H1 (cell line): ENCODE measurements at regions of chr19 and their contacts with region 1.

Region 1: GRCh38 chr19:13104360-13104847 is 1.7 kb upstream of the LYL1 start:
- DNase-seq: peak in 1 of 2 experiments; percentile 95
- H3K4me3 ChIP-seq: no peak overlapping the region
- H3K27ac ChIP-seq: no peak overlapping the region
- H3K4me1 ChIP-seq: peaks cover 0 to 23% (median 9%) of the 10 kb centered on the region in 4 experiments; a peak in 5 of 7 replicates
- H3K27me3 ChIP-seq: peaks cover 16 to 34% (median 28%) of the 10 kb centered on the region in 4 experiments
- CTCF ChIP-seq: peak; percentile 83 to 95 (median 86)
- EP300 ChIP-seq: no peak
- POLR2A ChIP-seq: no peak; a peak in 1 of 3 replicates
- RAD21 ChIP-seq: peak; percentile 34 to 58

Region 2: DNA sequence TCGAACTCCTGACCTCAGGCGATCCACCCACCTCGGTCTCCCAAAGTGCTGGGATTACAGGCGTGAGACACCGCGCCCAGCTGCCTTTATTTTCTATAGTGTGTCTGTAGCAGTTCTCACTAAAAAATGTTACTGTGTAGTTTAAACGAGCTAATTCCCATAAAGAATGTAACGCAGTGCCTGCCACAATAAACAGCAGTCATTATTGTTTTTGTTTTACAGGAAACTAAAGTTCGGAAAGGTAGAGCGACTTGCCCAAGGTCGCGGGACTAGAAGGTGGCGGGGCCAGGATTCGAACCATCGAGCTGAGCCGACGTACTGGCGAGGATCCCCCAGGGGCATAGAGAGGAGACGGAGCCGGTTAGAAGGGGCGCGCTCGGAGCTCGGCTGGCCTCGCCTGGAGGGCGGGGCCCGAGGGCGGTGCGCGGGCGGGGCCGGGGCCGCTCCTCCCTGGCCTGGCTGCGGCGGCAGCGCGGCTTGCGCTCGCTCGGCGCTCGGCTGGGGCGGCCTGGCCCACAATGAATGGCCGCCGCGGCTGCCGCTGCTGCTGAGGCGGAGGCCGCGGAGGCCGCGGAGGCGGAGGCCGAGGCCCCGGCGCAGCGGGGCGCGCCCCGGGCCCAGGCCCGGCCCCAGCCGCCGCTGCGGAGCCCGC is 13.5 kb after region 1 on chr19 and contains the start of gene NACC1:
- CTCF ChIA-PET with region 1: interaction called, 11 read pairs
- POLR2A ChIA-PET with region 1: interaction called, 141 read pairs
- DNase-seq: peak; percentile 70 to 87
- H3K4me3 ChIP-seq: peak within 1 kb of the TSS; percentile 92 to 100 (median 96)
- H3K27ac ChIP-seq: peak within 1 kb of the TSS; percentile 97
- H3K4me1 ChIP-seq: peaks cover 14 to 36% (median 26%) of the 10 kb centered on the region in 4 experiments
- H3K27me3 ChIP-seq: no peaks in the 10 kb centered on the region
- CTCF ChIP-seq: no peak
- EP300 ChIP-seq: peak in 1 of 2 experiments; percentile 13; a peak in 1 of 3 replicates
- POLR2A ChIP-seq: no peak; a peak in 1 of 3 replicates
- RAD21 ChIP-seq: no peak
- total RNA-seq, gene NACC1: 226 and 234 TPM in 2 replicates

Region 3: GRCh38 chr19:13187419-13187818 is 83.0 kb after region 1 on chr19:
- CTCF ChIA-PET with region 1: no interaction called
- POLR2A ChIA-PET with region 1: no interaction called
- DNase-seq: no peak
- H3K4me3 ChIP-seq: no peak overlapping the region
- H3K27ac ChIP-seq: no peak overlapping the region
- H3K4me1 ChIP-seq: no peaks in the 10 kb centered on the region; a peak in 2 of 7 replicates
- H3K27me3 ChIP-seq: no peaks in the 10 kb centered on the region
- CTCF ChIP-seq: no peak
- EP300 ChIP-seq: no peak
- POLR2A ChIP-seq: no peak
- RAD21 ChIP-seq: no peak